Prostate gland (tissue), 2 donors: ENCODE measurements at regions of chr20 and their contacts with region 1.

Region 1: GRCh38 chr20:44196271-44196670 is 9.3 kb upstream of the JPH2 start:
- DNase-seq: no peak
- H3K4me3 ChIP-seq: no peak overlapping the region
- H3K27ac ChIP-seq: no peak overlapping the region
- H3K4me1 ChIP-seq: no peaks in the 10 kb centered on the region
- H3K27me3 ChIP-seq: no peaks in the 10 kb centered on the region
- CTCF ChIP-seq: no peak
- POLR2A ChIP-seq: no peak

Region 2: GRCh38 chr20:43537921-43538877 is 658.1 kb before region 1 on chr20:
- intact Hi-C with region 1: loop called (anchors 5 kb)
- DNase-seq: peak; percentile 38
- H3K4me3 ChIP-seq: no peak overlapping the region
- H3K27ac ChIP-seq: no peak overlapping the region
- H3K4me1 ChIP-seq: no peaks in the 10 kb centered on the region
- H3K27me3 ChIP-seq: no peaks in the 10 kb centered on the region
- CTCF ChIP-seq: peak; percentile 56 to 81 (median 73)
- POLR2A ChIP-seq: no peak

Region 3: GRCh38 chr20:43767686-43768474 is 428.4 kb before region 1 on chr20:
- intact Hi-C with region 1: loop called (anchors 10 kb)
- DNase-seq: no peak
- H3K4me3 ChIP-seq: no peak overlapping the region
- H3K27ac ChIP-seq: no peak overlapping the region
- H3K4me1 ChIP-seq: no peaks in the 10 kb centered on the region
- H3K27me3 ChIP-seq: no peaks in the 10 kb centered on the region
- CTCF ChIP-seq: no peak
- POLR2A ChIP-seq: no peak

Region 4: GRCh38 chr20:44154521-44155001 is 41.7 kb before region 1 on chr20:
- intact Hi-C with region 1: no loop called
- DNase-seq: no peak
- H3K4me3 ChIP-seq: no peak overlapping the region
- H3K27ac ChIP-seq: peak overlapping the region; percentile 11 to 28
- H3K4me1 ChIP-seq: no peaks in the 10 kb centered on the region
- H3K27me3 ChIP-seq: no peaks in the 10 kb centered on the region
- CTCF ChIP-seq: no peak
- POLR2A ChIP-seq: no peak

Region 5: DNA sequence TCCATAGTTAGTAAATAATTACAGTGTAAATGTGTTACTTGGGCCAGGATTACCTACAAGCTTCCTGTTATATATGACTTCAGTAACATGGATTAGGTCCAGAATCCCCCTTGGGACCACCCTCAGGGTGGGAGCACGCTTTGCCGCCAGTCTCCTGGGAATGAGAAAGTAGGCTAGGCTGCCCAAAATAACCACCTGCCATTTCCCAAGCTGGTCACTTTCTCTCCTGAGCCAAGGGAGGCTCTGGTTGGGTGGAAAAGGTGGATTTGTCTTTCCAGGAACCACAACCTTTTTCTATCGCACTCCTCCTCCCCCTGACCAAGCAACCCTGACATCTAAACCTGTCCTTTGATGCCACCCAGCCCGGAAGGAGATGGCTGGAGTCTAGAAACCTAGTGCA is 623.7 kb after region 1 on chr20:
- intact Hi-C with region 1: no loop called
- DNase-seq: no peak
- H3K4me3 ChIP-seq: no peak overlapping the region
- H3K27ac ChIP-seq: no peak overlapping the region
- H3K4me1 ChIP-seq: no peaks in the 10 kb centered on the region
- H3K27me3 ChIP-seq: peaks cover 2% of the 10 kb centered on the region
- CTCF ChIP-seq: no peak
- POLR2A ChIP-seq: no peak